Cardiac septum (tissue), 1 donor: ENCODE measurements at regions of chr4 and their contacts with region 1.

Region 1: DNA sequence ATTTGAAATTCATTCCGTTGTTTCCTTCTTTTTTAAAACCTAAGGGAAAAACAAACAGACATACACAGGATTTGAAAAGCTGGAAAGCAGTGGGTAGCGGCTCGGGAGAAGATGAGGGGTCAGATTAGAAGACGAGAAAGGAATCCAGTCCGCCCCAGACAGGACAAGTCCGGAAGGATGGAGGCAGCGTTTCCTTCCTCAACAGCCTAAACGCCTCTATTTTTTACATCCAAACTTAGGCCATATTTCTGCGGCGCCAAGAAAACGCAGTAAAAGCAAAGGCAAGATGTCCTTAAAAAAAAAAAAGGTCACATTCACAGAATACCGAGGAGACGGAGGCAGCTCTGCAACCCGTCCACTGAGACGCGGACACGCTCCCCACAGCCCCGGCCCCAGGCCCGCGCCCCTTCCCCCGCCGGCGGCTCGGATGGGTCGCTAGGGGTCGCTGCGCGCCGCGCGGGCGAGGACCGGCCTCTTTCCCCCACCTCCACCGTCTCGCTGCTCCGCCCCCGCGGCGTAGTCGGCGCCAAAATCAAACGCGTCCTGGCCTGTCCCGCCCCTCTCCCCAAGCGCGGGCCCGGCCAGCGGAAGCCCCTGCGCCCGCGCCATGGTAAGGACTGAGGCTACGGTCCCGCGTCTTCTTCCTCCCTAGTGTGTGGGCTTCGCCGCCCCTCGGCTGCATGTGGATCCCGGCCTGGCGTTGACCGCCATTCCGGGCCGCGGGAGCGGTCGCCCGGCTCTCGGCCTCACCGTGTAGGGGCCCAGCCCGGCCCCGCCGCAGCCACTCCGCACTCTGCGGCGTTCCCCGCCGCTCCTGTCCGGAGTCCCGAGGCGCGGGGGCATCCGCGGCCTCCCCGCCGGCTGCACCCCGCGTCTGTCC is at the start of gene MND1:
- DNase-seq: peak; percentile 93
- total RNA-seq, gene MND1: not detected

Region 2: GRCh38 chr4:153079857-153080391 is 264.4 kb before region 1 on chr4:
- intact Hi-C with region 1: no loop called
- DNase-seq: no peak

Region 3: DNA sequence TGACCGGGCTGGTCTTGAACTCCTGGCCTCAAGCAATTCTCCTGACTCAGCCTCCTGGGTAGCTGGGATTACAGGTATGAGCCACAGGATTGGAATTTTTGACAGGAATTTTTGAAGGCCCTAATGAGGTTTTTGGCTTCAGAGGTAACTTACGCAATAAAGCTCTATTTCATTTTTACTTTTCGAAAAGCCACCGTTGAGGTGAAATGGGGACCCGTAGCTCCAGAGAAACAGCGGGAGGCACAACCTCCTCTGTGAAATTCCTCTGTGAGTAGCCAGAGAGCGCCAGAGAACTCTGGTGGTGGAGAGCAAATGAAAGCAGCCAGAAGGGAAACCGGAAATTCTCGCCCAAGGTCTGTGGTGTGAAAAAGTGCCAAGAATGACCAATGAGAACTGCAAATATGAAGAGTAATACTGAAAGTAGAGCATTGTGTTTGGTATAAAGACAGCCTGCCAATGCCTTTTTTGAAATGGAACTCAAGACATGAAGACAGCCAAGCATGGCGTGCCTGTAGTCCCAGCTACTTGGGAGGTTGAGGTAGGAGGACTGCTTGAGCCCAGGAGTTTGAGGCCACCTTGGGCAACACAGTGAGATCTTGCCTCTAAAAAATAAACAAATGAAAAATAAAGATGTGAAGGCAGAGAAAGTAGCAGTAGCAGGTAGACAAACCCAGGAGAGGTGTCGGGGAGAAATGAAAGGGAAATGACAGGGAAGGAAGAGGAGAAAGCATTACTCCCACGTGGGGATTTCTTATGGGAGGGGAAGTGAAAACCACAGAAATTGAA is 88.8 kb after region 1 on chr4:
- intact Hi-C with region 1: loop called (anchors 5 kb)
- DNase-seq: peak; percentile 81

Region 4: DNA sequence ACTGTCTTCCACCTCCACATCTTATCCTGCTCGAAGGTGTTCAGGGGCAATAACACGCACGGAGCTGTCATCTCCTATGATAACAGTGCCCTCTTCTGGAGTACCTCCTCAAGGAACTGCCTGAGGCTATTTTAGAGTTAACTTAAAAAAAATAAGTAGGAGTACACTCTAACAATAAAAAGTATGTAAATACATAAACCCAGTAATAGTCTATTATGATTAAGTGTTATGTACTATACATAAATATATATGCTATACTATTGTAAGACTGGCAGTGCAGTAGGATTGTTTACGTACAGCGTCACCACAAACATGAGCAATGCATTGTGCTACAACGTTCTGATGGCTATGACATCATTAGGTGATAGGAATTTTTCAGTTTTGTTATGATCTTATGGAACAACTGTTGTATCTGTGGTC is 305.2 kb after region 1 on chr4:
- intact Hi-C with region 1: loop called (anchors 5 kb)
- DNase-seq: no peak

Region 5: DNA sequence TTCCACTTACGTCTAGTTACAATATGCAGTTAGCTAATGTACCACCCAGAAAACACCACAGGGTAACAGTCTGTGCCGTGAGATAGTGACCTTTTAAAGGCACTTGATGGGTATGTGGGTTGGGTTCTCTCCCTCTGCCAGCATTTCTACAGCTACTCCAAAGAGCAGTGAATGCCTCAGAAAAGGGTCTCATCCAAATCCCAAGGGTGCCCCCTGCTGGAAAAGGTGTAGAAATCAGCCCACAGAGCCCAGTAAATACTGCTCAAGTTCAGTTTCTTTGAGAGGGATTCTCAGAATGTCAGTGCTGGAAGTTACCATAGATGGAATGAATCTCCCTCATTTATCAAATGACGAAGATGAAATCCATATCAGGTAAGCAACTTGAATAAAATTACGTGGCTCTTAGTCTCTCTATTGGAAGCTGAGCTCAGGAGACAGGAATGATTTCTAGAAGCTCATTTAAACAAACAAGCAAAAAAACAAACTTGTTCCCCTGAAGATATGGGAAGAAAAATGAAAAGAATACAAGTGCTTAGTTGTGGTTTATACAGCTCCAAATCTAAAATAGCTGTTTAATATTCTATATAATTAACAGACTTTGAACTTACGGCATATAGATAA is 405.9 kb after region 1 on chr4:
- intact Hi-C with region 1: loop called (anchors 10 kb)
- DNase-seq: no peak